Thyroid gland (tissue), 4 donors: ENCODE measurements at regions of chr19 and their contacts with region 1.

Region 1: GRCh38 chr19:4811328-4812131 is 20.0 kb downstream of the TICAM1 start:
- DNase-seq: peak; percentile 77 to 79
- H3K4me3 ChIP-seq: no peak overlapping the region
- H3K27ac ChIP-seq: no peak overlapping the region
- H3K4me1 ChIP-seq: peaks cover 0 to 12% of the 10 kb centered on the region in 2 donors
- H3K27me3 ChIP-seq: no peaks in the 10 kb centered on the region
- CTCF ChIP-seq: peak; percentile 69 to 89 (median 78)
- POLR2A ChIP-seq: no peak

Region 2: DNA sequence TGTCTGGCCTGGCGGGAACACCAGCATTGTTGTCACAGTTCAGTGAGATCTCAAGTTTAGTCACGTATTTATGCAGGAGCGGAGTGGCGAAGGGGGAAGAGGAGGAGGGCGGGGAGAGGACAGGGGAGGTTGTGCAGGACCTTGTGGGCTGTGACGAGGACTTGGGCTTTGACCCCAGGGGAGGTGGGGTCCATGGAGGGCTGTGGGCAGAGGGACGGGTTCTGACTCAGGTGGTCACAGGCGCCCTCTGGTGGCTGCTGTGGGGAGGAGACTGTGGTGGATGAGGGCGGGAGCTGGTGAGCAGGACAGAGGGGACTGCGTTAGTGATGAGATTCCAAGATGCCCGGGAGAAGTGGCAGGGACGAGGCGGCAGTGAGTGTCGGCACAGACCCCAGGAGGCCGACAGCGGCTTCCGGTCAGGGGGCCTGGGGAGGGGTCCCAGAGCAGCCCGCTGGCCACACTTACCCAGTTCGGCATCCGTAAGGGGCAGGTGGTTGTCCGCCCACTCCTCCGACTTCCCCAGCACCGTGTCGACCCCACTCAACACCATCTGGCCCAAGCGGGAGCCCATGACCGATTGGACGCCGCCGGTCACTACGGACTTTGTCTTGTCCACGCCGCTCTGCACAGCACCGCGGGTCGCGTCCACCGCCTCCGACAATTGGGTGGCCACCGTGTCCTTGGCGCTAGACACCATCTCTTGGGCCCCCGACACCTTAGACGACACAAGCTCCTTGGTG is 40.2 kb after region 1 on chr19:
- intact Hi-C with region 1: loop called (anchors 5 kb)
- DNase-seq: peak; percentile 94 to 95
- H3K4me3 ChIP-seq: no peak overlapping the region
- H3K27ac ChIP-seq: peak overlapping the region; percentile 80 to 85 (median 85)
- H3K4me1 ChIP-seq: peaks cover 26 to 37% of the 10 kb centered on the region in 2 donors
- H3K27me3 ChIP-seq: no peaks in the 10 kb centered on the region
- CTCF ChIP-seq: peak in 5 of 6 experiments; percentile 45 to 94 (median 77)
- POLR2A ChIP-seq: no peak

Region 3: DNA sequence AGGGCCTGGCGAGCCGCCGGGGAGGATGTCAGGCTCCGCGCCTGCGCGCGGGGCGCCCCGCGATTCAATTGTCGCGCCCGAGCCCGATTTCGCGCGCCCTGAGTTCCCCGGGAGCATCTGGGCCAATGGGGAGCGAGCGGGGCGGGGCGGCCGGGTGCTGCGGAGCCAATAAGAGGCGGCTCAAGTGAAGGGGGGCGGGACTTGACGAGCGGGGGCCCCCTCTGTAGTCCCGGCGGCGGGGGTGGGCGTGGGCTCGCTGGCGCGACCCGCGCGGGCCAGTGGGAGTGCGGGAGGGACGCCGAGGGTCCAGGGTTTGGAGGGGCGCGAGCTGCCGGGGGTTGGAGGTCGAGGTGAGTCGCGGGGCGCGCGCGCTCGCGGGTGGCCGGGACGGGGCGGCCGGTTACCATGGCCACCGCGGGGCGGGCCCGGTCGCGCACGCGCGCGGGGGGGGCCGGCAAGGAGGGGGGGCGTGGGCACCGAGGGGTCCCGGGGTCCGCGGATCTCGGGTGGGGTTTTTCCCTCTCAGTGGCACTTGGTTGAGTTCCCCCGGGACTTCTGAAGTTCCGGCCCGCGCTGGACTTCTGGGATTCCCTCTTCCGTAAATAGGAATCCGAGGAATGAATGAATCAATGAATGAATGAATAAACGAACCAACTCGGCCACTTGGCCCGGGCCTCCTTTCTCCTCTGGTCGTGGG is 98.5 kb after region 1 on chr19:
- intact Hi-C with region 1: loop called (anchors 2 kb)
- DNase-seq: peak; percentile 90 to 93
- H3K4me3 ChIP-seq: peak overlapping the region in 2 of 3 donors; percentile 31 to 51
- H3K27ac ChIP-seq: no peak overlapping the region
- H3K4me1 ChIP-seq: peaks cover 13 to 27% of the 10 kb centered on the region in 2 donors
- H3K27me3 ChIP-seq: no peaks in the 10 kb centered on the region
- CTCF ChIP-seq: no peak
- POLR2A ChIP-seq: no peak

Region 4: DNA sequence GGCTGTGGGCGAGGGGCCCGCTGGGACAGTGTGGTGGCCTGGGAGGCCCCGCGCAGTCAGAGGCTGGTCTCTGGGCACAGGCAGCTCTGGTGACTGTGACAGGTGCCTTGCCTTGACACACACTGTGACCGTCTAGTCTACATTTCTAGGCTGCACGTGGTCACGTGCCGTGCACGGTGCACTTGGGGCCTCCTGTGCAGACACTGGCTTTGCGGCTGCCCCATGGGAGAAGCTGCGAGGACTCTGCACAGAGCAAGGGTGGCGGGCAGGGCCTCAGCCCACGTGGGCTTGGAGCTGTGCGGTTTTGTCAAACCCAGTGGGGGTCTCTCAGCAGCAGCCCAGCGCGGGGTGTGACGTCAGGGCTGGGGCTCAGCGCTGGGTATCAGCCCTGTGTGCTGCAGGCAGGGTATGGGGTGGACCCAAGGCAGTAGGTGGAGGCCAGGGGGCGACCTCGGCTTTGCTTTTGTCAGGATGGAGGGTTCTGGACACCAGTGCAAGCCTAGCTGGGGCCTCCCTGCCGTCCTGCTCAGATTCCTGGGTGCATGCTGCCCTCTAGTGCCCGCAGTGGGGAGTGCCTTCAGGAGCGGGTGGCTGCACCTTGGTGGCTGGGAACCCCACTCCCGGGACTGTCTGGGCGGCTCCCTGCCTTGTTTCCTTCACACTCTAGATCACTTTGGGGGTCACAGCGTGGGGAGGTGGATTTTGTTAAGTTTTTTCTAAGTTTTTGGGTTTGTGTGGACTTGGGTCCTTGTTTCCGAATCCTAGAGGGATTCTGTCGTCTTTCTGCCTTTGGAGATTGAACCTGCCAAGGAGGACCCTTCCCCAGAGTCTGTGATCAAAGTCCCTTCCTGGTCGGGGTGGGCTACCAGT is 219.9 kb after region 1 on chr19:
- intact Hi-C with region 1: loop called (anchors 5 kb)
- DNase-seq: peak; percentile 79 to 84
- H3K4me3 ChIP-seq: no peak overlapping the region
- H3K27ac ChIP-seq: peak overlapping the region in 1 of 3 donors; percentile 23
- H3K4me1 ChIP-seq: peaks cover 24 to 30% of the 10 kb centered on the region in 2 donors
- H3K27me3 ChIP-seq: no peaks in the 10 kb centered on the region
- CTCF ChIP-seq: peak; percentile 72 to 96 (median 91)
- POLR2A ChIP-seq: no peak

Region 5: GRCh38 chr19:5103061-5103701 is 291.7 kb after region 1 on chr19:
- intact Hi-C with region 1: no loop called
- DNase-seq: peak; percentile 89 to 92
- H3K4me3 ChIP-seq: no peak overlapping the region
- H3K27ac ChIP-seq: peak overlapping the region in 2 of 3 donors; percentile 29 to 65
- H3K4me1 ChIP-seq: peaks cover 8 to 20% of the 10 kb centered on the region in 2 donors
- H3K27me3 ChIP-seq: no peaks in the 10 kb centered on the region
- CTCF ChIP-seq: peak in 1 of 6 experiments; percentile 9
- POLR2A ChIP-seq: no peak